Psoas muscle (tissue), 8 donors: ENCODE measurements at regions of chr13 and their contacts with region 1.

Region 1: GRCh38 chr13:44435142-44435982 is 61.7 kb downstream of the SERP2 start:
- DNase-seq: peak; percentile 92 to 95
- ATAC-seq: peak; percentile 73 to 78 (median 75)
- H3K4me3 ChIP-seq: peak overlapping the region; percentile 73
- H3K27ac ChIP-seq: peak overlapping the region; percentile 92
- H3K4me1 ChIP-seq: peaks cover 22% of the 10 kb centered on the region
- H3K27me3 ChIP-seq: no peaks in the 10 kb centered on the region
- CTCF ChIP-seq: no peak

Region 2: DNA sequence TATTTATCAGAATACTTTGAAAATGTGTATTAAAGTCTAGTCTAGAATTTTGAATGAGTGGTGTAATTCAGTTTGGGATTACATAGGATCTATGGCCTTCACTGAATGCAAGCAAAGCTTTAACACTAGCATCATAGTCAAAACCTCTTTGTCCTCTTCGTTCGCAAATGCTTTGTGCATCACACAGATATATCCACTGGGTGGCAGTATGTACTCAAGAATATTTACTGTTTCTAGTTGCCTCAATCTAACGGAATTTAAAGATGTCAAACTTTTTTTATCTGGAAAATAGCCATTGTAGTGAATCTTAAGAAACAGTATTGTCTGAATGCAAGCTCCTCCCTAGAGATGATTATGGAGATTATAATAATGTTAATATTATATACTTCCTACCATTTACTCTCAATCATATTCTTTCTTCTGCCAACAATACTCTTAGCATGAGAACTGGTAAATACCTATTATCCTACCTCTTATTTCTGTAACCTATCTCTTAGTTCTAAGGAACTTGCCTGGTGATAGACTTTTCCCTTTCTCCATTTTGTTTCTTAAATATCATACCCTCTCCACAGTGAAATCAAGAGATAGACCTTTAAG is 529.8 kb before region 1 on chr13:
- intact Hi-C with region 1: loop called (anchors 2 to 5 kb)
- DNase-seq: no peak
- ATAC-seq: peak; percentile 66 to 89 (median 82)
- H3K4me3 ChIP-seq: no peak overlapping the region
- H3K27ac ChIP-seq: no peak overlapping the region
- H3K4me1 ChIP-seq: peaks cover 6% of the 10 kb centered on the region
- H3K27me3 ChIP-seq: no peaks in the 10 kb centered on the region
- CTCF ChIP-seq: peak; percentile 88

Region 3: GRCh38 chr13:44141725-44142539 is 293.4 kb before region 1 on chr13:
- intact Hi-C with region 1: loop called in 1 of 2 experiments (anchors 5 kb)
- DNase-seq: peak; percentile 98 to 99
- ATAC-seq: peak; percentile 97 to 98 (median 97)
- H3K4me3 ChIP-seq: peak overlapping the region; percentile 73
- H3K27ac ChIP-seq: peak overlapping the region; percentile 95
- H3K4me1 ChIP-seq: peaks cover 13% of the 10 kb centered on the region
- H3K27me3 ChIP-seq: no peaks in the 10 kb centered on the region
- CTCF ChIP-seq: no peak

Region 4: DNA sequence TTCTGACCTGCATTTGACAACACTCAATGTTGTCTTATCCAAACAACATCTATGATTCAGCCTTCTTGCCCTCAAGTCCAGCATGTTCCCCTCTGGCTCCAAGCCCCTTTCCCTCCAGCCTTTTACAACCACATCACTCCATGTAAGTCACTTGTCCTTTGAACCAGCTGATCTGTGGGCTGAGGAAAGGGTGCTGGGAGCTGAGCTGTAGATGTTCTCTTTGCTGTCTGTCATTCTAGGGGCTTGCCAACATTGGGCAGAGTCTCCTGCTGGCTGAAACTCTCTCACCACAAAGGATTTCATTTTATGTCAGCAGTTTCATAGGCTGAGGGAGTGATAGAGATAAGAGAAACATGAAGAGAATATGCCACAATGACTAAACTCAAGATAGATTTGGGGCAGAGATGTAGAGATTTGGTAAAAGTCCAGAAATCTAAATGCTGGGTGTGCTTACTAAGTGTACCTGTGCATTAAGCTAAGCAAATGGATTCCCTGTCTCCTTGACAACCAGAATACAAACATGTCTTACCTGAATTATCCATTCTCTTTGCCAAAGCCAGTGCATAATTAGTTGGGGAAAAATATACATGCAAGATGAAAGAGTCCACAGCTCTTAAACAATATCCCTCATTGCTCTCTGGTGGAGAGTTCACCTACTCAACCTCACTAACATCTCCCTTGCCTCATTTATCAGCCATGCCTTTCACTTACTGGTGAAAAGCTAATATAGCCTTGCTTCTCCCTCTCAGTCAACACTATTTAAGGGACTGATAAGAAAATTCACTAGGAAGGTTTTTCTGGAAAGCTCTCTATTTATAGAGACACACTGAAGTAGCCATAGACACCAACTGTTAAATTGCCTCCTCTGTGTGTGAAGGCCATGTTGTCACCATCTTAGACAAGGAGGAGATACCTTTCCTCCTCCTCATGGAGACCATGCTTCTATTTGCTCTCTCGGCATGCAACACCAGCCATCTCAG is 237.3 kb before region 1 on chr13:
- intact Hi-C with region 1: loop called in 1 of 2 experiments (anchors 5 kb)
- DNase-seq: no peak
- ATAC-seq: no peak
- H3K4me3 ChIP-seq: no peak overlapping the region
- H3K27ac ChIP-seq: no peak overlapping the region
- H3K4me1 ChIP-seq: peaks cover 19% of the 10 kb centered on the region
- H3K27me3 ChIP-seq: no peaks in the 10 kb centered on the region
- CTCF ChIP-seq: no peak

Region 5: DNA sequence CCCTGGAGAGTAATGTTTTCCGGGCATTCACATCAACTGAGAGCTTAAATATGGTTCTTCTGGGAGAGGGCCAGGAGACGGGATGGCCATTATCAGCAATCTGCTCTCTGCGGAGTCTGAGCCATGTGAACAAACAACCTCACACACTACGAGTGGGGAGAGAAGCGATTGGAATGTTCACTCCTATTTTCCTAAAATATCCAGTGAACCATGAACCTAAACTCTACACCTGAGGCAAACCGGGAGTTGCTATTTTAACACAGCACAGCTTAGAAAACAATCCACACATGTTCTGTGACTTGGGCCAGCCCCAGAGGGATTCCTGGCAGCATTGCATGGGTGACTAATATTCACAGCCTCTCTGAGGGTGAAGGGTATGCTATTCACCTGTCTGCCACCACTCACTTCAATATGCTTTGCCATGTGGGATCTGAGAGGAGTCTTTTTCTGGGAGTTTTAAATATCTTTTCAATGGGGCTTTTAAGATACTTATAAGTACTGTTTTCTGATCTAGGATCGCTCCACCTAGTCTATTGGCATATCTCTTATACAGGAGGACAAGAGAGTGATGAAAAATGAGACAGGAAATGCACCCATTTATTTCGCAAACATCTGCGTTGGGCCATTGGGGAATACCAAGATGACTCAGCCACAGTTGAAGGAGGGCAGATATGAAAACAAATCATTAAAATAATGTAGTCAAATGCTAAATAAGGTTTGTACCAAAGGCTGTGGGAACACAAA is 134.3 kb before region 1 on chr13:
- intact Hi-C with region 1: loop called in 1 of 2 experiments (anchors 10 kb)
- DNase-seq: peak; percentile 39 to 78
- ATAC-seq: peak; percentile 94 to 97 (median 95)
- H3K4me3 ChIP-seq: peak overlapping the region; percentile 28
- H3K27ac ChIP-seq: peak overlapping the region; percentile 90
- H3K4me1 ChIP-seq: peaks cover 69% of the 10 kb centered on the region
- H3K27me3 ChIP-seq: no peaks in the 10 kb centered on the region
- CTCF ChIP-seq: peak; percentile 3

Region 6: DNA sequence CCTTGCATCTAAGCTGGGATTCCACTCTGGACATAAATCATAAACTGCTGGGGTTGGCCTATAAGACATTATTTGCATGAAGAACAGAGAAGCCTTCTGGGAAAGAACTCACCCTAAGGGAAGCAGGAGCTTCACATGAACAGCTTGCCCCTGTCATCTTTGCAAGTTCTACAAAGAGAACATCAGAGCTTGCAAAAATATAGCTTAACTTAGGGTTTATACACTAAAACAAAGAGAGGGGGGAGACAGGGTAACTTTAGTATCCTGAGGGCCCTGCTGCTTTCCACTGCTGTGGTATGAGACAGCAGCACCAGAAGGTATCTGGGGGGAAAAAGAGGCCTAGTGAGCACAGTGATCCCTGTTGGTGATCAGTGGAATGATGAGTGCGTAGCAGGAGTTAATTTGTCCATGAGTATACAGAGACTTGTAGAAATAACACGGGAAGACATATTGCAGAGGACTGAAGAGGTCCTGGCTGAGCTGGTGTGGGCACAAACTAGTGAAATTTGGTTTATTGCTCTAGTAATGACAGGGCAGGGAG is 256.9 kb after region 1 on chr13:
- intact Hi-C with region 1: no loop called
- DNase-seq: no peak
- ATAC-seq: no peak
- H3K4me3 ChIP-seq: no peak overlapping the region
- H3K27ac ChIP-seq: no peak overlapping the region
- H3K4me1 ChIP-seq: peaks cover 22% of the 10 kb centered on the region
- H3K27me3 ChIP-seq: no peaks in the 10 kb centered on the region
- CTCF ChIP-seq: no peak